Cardiac septum (tissue), 1 donor: ENCODE measurements at regions of chr22 and their contacts with region 1.

Region 1: DNA sequence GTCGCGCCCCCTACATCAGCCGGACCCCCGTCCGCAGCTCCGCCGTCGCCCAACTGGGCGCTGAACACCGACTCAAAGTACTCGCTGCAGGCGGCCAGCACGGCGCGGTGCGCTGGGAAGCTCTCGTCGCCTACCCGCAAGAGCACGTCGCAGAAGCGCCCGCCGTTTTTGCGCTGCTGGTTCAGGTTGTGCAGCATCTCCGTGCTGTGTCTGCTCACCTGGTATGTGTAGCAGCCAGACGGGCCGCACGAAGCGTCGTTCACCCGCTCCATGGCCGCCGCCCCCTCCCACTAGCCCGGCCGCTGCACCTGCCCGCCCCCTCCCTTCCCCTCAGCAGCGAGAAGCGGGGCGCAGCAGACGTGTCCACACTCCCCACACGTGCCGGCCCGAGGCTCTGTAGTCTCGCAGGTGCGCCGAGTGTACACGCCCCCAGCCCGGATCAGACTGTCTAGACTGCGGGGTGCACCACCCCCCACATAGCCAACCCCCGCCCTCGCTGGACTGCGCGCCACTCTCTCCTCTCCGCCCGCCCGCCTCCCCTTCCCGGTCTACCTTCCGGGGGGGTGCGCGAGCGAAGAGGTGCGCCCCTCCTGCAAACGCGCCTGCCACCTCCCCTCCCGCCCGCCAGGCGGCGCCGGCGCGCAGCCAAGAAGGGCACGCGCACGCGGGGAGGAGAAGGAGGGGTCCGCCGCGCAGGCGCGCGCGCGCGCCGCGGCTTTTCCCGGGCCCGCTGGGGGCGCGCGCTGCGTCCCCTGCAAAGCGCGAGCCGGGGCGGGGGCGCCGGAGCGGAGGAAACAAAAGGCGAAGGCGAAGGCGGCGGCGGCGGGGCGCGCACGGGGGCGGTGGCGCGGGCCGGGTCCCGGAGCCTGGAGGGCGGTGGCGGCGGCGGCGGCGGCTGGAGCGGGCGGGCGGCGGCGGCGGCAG is 553 bp downstream of the PATZ1 start:
- DNase-seq: peak; percentile 90

Region 2: DNA sequence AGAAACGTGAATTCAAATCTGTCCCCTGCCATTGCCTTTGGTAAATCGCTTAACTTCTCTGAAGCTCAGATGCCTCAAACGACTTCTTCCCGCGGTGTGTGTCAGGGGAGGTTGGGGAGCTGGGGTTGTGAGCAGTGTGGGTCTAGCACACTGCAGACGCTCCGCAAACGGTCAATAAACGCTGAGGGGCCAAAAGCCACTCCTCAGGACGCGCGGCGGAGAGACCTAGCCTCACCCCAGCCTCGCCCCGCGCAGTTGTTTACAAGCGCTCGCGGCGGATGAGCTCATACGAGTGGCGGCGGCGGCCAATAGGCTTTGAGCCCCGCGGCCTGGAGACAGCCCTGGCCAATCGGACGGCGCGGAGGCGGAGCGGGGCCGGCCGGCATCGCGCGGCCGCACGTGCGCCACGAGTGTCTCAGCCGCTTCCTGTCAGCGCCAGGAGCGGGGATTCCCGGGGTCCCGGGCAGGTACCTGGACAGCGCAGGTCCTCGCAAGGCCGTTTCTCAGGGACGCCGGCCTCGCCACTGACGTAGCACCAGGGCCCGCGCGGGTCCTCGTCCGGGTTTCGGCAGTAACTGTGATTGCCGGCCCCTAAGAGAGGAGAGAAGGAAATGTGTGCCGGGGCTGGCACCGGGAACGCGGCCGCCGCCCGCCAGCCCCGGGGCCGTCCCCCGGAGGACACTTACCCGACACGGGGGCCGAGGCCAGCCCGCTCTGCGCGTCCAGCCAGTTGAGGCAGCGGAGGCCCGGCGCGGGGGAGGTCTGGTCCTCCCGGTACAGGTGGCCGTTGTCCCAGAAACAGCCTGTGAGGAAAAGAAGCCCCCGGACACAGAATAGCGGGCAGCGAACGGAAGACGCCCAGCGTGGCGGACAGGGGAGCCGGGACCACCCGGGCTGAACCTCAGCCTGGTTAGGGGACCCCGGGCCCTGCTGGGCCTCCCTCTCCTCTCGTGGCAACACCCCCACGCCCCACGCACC is 54.8 kb before region 1 on chr22:
- intact Hi-C with region 1: loop called (anchors 2 kb)
- DNase-seq: peak; percentile 98

Region 3: GRCh38 chr22:31399211-31400028 is 53.8 kb after region 1 on chr22 and contains the start of gene DRG1:
- intact Hi-C with region 1: loop called (anchors 1 kb)
- DNase-seq: peak; percentile 98
- total RNA-seq, gene DRG1: 48.3 TPM

Region 4: DNA sequence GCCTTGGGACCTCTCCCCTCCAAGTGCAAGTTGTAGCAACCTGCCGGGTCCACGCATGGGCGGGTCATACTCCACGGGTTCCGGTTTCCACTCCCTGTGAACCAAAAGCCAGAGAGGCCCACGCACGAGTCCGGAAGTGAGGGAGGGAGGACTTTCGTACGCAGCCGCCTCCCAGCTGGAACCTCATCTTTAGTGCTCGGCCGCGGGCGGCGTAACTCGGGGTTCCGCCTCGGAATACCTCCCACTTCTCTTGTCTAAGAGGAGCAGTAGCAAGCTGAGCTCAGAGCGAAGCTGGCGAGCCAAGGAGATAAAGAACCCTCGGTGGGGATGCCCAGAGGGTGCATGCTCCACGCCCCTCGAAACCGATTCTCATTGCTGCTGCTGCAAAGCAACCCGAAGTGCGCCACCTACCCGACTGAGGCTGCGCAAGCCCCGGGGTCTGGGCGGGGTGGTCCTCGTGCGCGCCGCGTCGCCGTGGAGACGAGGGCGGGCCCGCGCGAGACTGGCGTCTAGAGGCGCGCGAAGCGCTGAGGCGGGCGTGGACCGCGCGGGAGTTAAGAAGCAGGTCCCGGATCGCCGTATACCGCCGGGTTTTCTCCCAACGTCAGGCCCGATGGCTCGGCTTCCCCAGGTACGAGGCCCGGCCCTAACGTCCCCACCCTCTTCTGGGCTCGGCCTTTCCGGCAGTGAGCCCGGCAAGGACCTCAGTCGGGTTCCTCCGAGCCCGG is 150.6 kb after region 1 on chr22 and contains the start of gene SFI1:
- intact Hi-C with region 1: loop called (anchors 5 kb)
- DNase-seq: peak; percentile 95
- total RNA-seq, gene SFI1: 8.6 TPM

Region 5: DNA sequence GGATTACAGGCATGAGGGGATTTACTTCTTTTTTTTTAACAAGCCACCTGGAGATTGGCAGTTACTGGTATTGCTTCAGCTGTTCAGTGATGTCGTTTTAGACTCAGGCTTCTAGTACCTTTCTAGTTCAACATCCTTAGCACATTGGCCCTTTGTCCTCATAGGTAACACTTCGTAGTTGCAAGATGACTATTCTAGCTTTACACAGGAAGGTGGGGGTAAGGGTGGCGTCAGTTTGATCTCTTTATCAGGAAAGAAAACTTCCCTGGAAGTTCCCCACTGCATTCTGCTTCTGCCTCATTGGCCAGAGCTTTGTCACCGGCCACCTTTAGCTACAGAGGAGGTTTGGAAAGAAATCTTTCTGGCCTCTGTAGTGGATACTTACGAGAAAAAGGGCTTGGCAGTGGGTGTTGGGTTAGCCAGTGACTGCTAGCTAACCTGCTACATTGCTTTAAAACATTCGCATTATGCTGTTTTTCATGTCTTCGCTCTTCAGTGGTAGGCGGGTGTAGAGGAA is 191.5 kb after region 1 on chr22:
- intact Hi-C with region 1: no loop called
- DNase-seq: no peak

Region 6: DNA sequence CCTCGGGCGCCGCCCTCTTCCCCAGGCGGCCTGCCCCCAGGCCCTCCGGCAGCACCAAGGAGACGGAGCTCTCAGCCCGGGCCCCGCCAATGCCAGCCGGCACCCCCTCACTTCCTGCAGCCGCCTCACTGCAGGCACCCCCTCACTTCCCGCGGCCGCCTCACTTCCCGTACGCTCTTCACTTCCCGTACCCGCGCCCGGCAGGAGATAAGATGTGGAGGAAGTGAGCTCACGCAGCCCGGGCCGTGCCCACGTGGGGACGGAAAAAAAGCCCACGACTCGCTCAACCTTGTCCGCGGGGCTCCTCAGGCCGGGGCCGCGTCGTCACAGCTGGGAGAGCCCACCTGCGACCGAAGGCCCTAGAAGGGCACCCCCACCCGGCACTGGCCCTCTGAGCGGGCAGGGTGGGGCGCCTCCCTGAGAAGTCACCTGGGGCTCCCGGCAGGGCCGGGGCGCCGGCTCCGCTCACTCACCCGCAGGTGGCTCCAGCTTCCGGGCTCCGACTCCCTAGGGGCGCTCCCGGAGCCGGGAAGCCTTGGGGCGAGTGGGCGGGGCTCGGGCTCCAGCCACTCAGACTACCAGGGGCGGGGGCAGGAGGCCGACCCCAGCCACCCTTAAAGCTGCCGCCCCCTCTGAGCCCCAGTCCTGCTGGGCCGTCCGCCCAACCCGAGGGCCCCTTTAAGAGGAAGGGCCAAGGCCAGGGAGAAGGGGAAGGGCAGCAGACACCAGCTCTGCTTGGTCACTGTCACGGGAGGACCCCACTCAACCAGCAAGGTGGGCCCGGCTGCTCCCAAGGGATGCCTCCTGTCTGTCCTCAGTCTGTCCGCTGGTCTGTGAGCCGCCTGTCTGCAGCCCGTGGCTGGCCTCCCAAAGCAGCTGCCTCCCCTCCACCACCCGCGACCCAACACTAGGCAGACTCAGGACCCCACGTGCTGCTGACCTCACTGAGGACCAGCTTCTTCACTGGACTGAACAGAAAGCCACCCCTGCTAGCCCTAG is 285.0 kb after region 1 on chr22:
- intact Hi-C with region 1: loop called (anchors 10 kb)
- DNase-seq: peak; percentile 93